Left ventricle myocardium inferior (tissue), 1 donor: ENCODE measurements at regions of chr18 and their contacts with region 1.

Region 1: DNA sequence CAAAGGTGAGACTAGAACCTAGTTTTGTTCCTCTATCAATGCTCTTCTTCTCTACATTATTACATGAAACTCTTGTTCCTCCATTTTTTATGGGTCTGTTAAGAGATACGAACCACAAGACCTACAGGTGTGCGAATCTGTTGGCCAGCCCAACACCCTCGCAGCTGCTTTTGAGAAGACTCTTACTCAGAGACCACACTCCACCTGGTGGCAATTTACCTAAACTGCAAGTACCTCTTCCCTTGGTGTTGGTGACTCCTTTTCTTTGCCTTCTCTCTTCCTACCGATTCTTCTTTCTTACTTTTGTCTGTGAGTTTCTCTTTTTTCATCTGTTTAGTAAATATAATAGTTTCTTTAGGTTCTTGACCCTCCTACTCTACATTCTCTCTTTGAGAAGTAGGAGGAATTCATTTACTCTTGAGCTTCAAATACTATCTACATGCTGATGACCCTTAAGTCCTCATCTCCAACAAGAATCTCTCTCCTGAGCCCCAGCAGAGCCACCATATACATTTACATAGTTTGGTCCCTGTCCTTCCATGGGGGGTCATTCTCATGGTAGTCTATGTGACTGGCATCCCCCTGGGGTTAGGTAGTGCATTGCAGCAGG is 81.8 kb upstream of the GAREM1 start:
- DNase-seq: no peak
- H3K4me3 ChIP-seq: no peak overlapping the region
- H3K27ac ChIP-seq: no peak overlapping the region
- H3K4me1 ChIP-seq: no peaks in the 10 kb centered on the region
- H3K27me3 ChIP-seq: peaks cover 10% of the 10 kb centered on the region
- CTCF ChIP-seq: peak; percentile 81

Region 2: GRCh38 chr18:32152705-32153448 is 399.6 kb before region 1 on chr18:
- intact Hi-C with region 1: loop called (anchors 2 kb)
- DNase-seq: no peak
- H3K4me3 ChIP-seq: no peak overlapping the region
- H3K27ac ChIP-seq: no peak overlapping the region
- H3K4me1 ChIP-seq: no peaks in the 10 kb centered on the region
- H3K27me3 ChIP-seq: peaks cover 6% of the 10 kb centered on the region
- CTCF ChIP-seq: no peak

Region 3: DNA sequence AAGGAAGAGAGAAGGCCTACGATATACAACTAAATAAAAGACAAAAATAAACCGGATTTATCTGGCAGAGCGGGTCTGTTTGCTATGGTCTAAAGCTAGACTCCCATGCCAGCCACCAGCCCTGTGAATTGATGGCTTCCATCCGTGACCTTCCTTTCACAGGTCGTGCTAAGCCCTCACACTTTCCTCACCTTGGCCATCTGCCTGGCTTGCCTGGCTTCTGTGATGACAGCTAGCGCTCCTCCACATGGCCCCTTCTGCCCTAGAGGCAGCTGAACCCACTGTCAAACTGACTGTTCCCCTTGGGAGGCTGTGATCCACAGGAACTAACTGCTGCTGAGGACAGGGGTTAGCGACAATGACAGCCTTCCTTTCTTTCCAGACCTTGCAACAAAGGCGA is 114.4 kb before region 1 on chr18:
- intact Hi-C with region 1: no loop called
- DNase-seq: peak; percentile 72
- H3K4me3 ChIP-seq: no peak overlapping the region
- H3K27ac ChIP-seq: peak overlapping the region; percentile 79
- H3K4me1 ChIP-seq: peaks cover 99% of the 10 kb centered on the region
- H3K27me3 ChIP-seq: no peaks in the 10 kb centered on the region
- CTCF ChIP-seq: no peak

Region 4: GRCh38 chr18:32822197-32822596 is 269.7 kb after region 1 on chr18:
- intact Hi-C with region 1: no loop called
- DNase-seq: no peak
- H3K4me3 ChIP-seq: no peak overlapping the region
- H3K27ac ChIP-seq: no peak overlapping the region
- H3K4me1 ChIP-seq: no peaks in the 10 kb centered on the region
- H3K27me3 ChIP-seq: no peaks in the 10 kb centered on the region
- CTCF ChIP-seq: no peak